ENCODE measurements at regions of chr2 and their contacts with region 1.

Region 1: GRCh38 chr2:201795607-201796477 is 10.5 kb upstream of the CDK15 start:
- DNase-seq: peak in 2 of 10 donors; percentile 19 to 52
- H3K4me3 ChIP-seq: no peak overlapping the region
- H3K27ac ChIP-seq: no peak overlapping the region
- H3K27me3 ChIP-seq: peaks cover 0 to 6% (median 0%) of the 10 kb centered on the region in 45 donors
- CTCF ChIP-seq: peak; percentile 31 to 77 (median 65)

Region 2: GRCh38 chr2:202178342-202178958 is 382.6 kb after region 1 on chr2:
- intact Hi-C with region 1: loop called (anchors 5 to 10 kb)
- DNase-seq: peak in 4 of 10 donors; percentile 22 to 71 (median 59)
- H3K4me3 ChIP-seq: no peak overlapping the region
- H3K27ac ChIP-seq: no peak overlapping the region
- H3K27me3 ChIP-seq: no peaks in the 10 kb centered on the region
- CTCF ChIP-seq: peak; percentile 70 to 98 (median 91)

Measured in dorsolateral prefrontal cortex (tissue), 120 donors.